Panc1 (cell line): ENCODE measurements at regions of chr9 and their contacts with region 1.

Region 1: GRCh38 chr9:6054280-6055099 is 39.1 kb upstream of the RANBP6 start:
- DNase-seq: peak; percentile 24
- ATAC-seq: peak; percentile 68; the same call in 1 of the 2 replicates
- H3K4me3 ChIP-seq: no peak overlapping the region
- H3K27ac ChIP-seq: no peak overlapping the region
- H3K4me1 ChIP-seq: no peaks in the 10 kb centered on the region
- H3K27me3 ChIP-seq: no peaks in the 10 kb centered on the region
- CTCF ChIP-seq: peak; percentile 58

Region 2: GRCh38 chr9:5886114-5886939 is 168.2 kb before region 1 on chr9:
- CTCF ChIA-PET with region 1: no interaction called
- POLR2A ChIA-PET with region 1: no interaction called
- in situ Hi-C with region 1: no loop called
- intact Hi-C with region 1: loop called (anchors 5 kb)
- DNase-seq: peak; percentile 48
- ATAC-seq: peak; percentile 91
- H3K4me3 ChIP-seq: no peak overlapping the region
- H3K27ac ChIP-seq: no peak overlapping the region
- H3K4me1 ChIP-seq: no peaks in the 10 kb centered on the region
- H3K27me3 ChIP-seq: no peaks in the 10 kb centered on the region
- CTCF ChIP-seq: peak; percentile 76

Region 3: DNA sequence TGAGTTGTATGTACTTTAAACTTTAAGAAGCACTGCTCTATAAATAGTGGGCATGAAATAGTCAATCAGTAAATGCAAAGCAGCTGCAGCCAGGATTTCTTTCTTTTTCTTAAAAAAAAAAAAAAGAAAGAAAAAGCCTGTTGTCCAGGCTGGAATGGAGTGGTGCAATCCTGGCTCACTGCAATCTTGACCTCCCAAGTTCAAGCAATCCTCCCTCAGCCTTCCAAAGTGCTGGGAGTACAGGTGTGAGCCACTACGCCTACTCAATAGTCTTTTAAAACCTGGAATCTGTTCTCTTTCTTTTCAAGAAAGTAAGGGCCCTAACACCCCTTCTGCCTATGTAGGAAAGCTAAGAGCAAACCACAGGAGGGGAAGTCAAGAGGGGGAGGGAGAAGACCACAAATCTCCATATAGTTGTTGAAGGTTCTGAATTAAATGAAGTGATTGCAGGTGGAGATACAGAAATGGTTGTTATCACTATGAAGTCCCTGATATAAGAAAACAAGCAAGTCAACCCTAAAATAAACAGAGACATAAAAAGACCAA is 253.1 kb after region 1 on chr9:
- CTCF ChIA-PET with region 1: no interaction called
- POLR2A ChIA-PET with region 1: no interaction called
- in situ Hi-C with region 1: no loop called
- intact Hi-C with region 1: no loop called
- DNase-seq: no peak
- ATAC-seq: no peak
- H3K4me3 ChIP-seq: no peak overlapping the region
- H3K27ac ChIP-seq: no peak overlapping the region
- H3K4me1 ChIP-seq: no peaks in the 10 kb centered on the region
- H3K27me3 ChIP-seq: no peaks in the 10 kb centered on the region
- CTCF ChIP-seq: no peak